GM12878 (cell line): ENCODE measurements at regions of chr18 and their contacts with region 1.

Region 1: GRCh38 chr18:49728542-49728941 is 84.8 kb downstream of the ACAA2 start:
- DNase-seq: no peak
- ATAC-seq: peak; percentile 77
- H3K4me3 ChIP-seq: no peak overlapping the region
- H3K27ac ChIP-seq: no peak overlapping the region
- H3K4me1 ChIP-seq: peaks cover 5% of the 10 kb centered on the region
- H3K27me3 ChIP-seq: peaks cover 0 to 3% of the 10 kb centered on the region in 2 experiments; a peak in 1 of 4 replicates
- CTCF ChIP-seq: peak; percentile 67 to 80 (median 69)
- EP300 ChIP-seq: no peak
- POLR2A ChIP-seq: no peak
- RAD21 ChIP-seq: peak; percentile 59

Region 2: DNA sequence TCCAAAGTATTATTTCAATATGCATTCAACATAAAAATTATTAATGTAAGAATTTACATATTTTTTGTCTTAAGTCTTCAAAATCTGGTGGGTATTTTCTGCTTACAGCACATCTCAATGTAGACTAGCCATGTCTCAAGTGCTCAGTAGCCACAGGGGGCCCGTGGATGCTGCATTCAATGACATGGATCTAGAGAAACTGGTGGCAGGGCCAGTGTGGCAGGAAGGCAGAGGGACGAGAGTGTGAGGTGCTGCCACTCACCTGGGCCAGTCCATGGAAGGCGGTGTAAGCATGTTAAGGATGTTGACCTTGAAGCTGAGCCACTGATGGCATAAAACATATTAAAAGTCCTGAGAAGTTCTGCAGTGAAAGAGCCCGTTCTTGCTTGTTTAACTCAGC is 172.9 kb before region 1 on chr18:
- CTCF ChIA-PET with region 1: interaction called, 4 read pairs
- POLR2A ChIA-PET with region 1: no interaction called
- RAD21 ChIA-PET with region 1: no interaction called
- SMC1A ChIA-PET with region 1: interaction called, 4 read pairs
- in situ Hi-C with region 1: no loop called
- intact Hi-C with region 1: loop called (anchors 5 kb)
- DNase-seq: no peak
- ATAC-seq: no peak
- H3K4me3 ChIP-seq: no peak overlapping the region
- H3K27ac ChIP-seq: no peak overlapping the region
- H3K4me1 ChIP-seq: no peaks in the 10 kb centered on the region
- H3K27me3 ChIP-seq: peaks cover 1 to 3% of the 10 kb centered on the region in 2 experiments; a peak in 3 of 4 replicates
- CTCF ChIP-seq: no peak
- EP300 ChIP-seq: no peak
- POLR2A ChIP-seq: no peak
- RAD21 ChIP-seq: no peak